Gastrocnemius medialis (tissue), 4 donors: ENCODE measurements at regions of chr7 and their contacts with region 1.

Region 1: DNA sequence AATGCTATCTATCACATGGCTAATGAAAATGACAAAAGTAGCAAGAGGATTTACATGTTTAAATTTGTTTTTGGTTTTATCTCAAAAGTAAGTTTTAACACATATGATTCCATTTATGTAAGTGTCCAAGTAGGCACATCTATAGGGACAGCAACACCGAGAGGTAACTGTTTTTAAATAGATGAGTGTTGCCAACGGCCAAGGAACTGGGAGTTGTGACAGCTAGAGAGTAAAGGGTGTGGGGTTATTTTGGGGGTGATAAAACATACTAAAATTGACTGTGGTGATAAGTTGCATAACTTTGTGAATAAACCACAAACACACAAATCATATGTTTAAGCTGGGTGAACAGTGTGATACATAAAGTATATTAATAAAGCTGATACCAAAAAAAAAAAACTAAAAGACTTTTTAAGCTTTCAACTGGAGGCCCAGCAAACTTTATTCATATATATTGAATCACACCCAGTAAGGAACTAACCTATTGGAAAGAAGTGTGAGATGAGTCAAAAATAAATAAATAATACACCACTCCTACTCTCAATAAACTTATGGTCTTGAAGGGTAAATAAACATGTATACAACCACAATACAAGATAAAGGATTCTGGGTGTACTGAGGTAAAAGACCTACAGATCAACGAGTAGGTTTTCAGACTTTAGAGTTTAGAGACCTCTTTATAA is 33.0 kb downstream of the LRRC72 start:
- DNase-seq: no peak
- ATAC-seq: no peak
- H3K4me3 ChIP-seq: no peak overlapping the region
- H3K27ac ChIP-seq: no peak overlapping the region
- H3K4me1 ChIP-seq: no peaks in the 10 kb centered on the region
- H3K27me3 ChIP-seq: no peaks in the 10 kb centered on the region
- CTCF ChIP-seq: no peak
- POLR2A ChIP-seq: no peak

Region 2: DNA sequence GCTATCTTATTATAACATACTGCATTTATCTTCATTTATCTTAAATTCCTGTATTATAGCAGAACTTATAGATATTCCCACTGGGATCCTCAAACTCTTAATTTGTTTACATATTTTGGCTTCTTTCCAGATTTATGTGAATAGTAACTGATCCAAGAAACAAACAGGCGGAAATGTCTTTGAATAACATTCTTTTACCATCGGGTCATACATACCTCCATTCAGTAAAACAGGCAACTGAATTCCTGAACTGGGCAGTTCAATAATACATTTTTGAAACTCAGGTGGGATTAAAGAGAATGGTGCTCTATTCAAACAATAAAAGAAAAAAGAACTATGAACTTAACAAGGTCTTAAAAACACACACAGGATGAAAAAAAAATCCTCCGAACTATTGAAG is 475.7 kb before region 1 on chr7:
- in situ Hi-C with region 1: loop called in 3 of 4 experiments (anchors 5 to 10 kb)
- intact Hi-C with region 1: loop called (anchors 2 kb)
- DNase-seq: no peak
- ATAC-seq: no peak
- H3K4me3 ChIP-seq: no peak overlapping the region
- H3K27ac ChIP-seq: no peak overlapping the region
- H3K4me1 ChIP-seq: no peaks in the 10 kb centered on the region
- H3K27me3 ChIP-seq: no peaks in the 10 kb centered on the region
- CTCF ChIP-seq: no peak
- POLR2A ChIP-seq: no peak